ENCODE measurements at regions of chr11 and their contacts with region 1.

Region 1: DNA sequence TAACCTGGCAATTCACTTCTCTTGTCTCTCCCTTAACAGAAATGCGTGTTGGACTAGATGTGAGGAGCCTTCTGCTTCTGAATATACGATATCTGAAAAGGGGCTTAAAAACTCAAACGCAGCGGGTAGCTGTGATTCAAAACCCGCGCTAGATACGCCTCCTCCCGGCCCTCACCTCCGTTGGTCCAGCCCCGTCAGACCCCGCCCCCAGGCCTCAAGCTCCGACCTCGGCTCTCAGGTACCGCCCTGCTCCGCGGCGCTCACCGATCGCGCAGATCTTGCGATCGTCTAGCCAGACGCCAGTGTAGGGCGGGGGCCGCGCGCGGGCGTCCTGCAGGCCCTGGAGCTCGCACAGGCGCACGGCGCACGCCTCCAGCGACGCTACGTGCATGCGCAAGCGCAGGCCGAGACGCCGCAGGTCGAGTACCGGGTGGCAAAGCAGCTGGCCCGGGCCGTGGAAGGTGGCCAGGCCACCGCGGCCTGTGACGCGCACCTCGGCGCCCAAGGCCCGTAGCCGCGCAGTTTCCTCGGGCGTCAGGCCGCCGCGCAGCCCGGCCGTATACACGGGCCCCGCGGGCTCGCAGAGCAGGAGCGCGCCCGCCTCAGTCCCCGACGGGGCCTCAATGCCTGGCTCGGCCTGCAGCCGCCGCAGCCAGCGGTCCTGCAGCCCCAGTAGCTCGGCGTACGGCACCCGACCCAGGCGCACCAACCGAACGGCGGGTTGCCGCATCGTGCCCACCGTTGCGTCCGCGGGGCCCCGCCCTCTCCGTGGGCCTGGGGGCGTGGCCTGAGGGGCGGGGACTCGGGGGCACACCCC is at the start of gene LIPT2:
- DNase-seq: peak; percentile 94
- ATAC-seq: peak; percentile 95
- H3K4me3 Mint-ChIP-seq: peak within 1 kb of the TSS; percentile 85
- H3K27ac Mint-ChIP-seq: peak within 1 kb of the TSS; percentile 85
- H3K4me1 Mint-ChIP-seq: peaks cover 19% of the 10 kb centered on the region
- H3K27me3 Mint-ChIP-seq: no peaks in the 10 kb centered on the region
- CTCF ChIP-seq: no peak
- total RNA-seq, gene LIPT2: 4.1 and 5.4 TPM in 2 replicates

Region 2: DNA sequence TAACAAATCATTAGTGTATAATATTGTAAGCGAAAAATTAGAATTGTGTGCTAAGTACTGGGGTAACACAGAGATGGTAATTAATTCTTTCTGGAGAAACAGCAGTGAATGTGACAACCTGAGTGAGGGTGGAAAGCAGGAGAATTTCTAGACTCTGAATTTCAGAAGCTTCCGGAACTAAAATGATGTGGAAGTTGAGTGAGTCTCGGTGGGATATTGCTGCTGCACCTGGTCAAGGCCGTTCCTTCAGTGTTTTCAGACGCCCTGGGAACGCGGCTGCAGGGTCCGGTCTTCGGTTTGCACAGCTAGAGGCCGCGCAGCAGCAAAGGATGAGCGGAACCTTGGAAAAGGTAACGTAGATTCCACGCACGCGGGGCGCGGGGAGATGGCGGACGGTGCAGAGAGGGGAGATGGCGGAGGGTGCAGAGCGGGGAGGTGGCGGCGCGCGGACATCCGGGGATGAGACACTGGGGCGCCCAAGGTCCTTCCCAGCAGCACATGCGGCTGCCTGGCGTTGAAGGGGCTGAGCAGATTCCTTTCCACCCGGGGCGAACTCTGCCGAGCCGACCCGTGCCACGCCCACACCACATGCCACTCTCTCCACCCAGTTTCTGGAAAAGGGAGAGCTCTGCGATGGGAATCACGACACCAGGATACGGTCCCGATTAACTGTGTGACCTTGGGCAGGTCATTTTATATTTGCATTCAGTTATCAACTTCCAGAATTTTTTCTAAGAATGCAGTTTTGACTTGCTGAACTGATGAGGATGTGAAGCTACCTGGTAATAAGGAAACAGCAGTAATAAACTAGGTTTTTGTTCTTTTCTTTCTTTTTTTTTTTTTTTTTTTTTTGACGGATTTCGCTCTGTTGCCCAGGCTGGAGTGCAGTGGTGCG is 705.3 kb before region 1 on chr11 and contains the start of gene MRPL48:
- CTCF ChIA-PET with region 1: no interaction called
- POLR2A ChIA-PET with region 1: interaction called, 4 read pairs
- intact Hi-C with region 1: loop called (anchors 5 kb)
- DNase-seq: peak; percentile 84
- ATAC-seq: peak; percentile 100
- H3K4me3 Mint-ChIP-seq: peak within 1 kb of the TSS; percentile 100
- H3K27ac Mint-ChIP-seq: peak within 1 kb of the TSS; percentile 100
- H3K4me1 Mint-ChIP-seq: peaks cover 15% of the 10 kb centered on the region
- H3K27me3 Mint-ChIP-seq: no peaks in the 10 kb centered on the region
- CTCF ChIP-seq: no peak
- total RNA-seq, gene MRPL48: 38.3 and 40.6 TPM in 2 replicates

Region 3: DNA sequence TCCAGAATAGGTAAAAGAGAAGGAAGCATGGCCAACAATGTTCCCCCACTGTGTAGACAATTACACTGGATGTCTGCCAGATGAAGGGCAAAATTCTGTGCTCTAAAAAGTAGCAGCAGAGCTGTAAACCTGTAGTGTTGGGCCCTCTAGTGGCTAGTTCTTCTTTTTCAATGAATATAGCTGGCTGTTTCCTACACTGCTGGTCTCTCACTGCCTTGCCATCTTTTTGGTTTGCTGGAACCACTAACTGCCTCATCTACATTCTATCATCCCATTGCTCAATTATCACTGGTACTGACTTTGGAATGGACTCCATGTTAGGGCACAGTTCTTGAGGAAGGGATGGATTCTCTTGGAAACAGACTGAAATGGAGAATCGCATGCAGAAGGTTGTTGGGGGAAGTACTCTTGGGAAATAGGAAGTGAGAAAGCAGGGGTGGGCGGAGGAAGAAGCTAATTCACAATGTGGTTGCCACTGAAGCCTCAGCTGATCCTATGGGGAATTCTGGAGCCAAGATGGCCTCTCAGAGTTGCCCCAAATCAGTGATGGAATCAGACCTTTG is 43.7 kb before region 1 on chr11:
- CTCF ChIA-PET with region 1: interaction called, 7 read pairs
- POLR2A ChIA-PET with region 1: interaction called, 8 read pairs
- intact Hi-C with region 1: loop called (anchors 1 kb)
- DNase-seq: peak; percentile 15
- ATAC-seq: peak; percentile 92
- H3K4me3 Mint-ChIP-seq: peak overlapping the region; percentile 54
- H3K27ac Mint-ChIP-seq: no peak overlapping the region
- H3K4me1 Mint-ChIP-seq: peaks cover 9% of the 10 kb centered on the region
- H3K27me3 Mint-ChIP-seq: peaks cover 15% of the 10 kb centered on the region
- CTCF ChIP-seq: no peak

Region 4: DNA sequence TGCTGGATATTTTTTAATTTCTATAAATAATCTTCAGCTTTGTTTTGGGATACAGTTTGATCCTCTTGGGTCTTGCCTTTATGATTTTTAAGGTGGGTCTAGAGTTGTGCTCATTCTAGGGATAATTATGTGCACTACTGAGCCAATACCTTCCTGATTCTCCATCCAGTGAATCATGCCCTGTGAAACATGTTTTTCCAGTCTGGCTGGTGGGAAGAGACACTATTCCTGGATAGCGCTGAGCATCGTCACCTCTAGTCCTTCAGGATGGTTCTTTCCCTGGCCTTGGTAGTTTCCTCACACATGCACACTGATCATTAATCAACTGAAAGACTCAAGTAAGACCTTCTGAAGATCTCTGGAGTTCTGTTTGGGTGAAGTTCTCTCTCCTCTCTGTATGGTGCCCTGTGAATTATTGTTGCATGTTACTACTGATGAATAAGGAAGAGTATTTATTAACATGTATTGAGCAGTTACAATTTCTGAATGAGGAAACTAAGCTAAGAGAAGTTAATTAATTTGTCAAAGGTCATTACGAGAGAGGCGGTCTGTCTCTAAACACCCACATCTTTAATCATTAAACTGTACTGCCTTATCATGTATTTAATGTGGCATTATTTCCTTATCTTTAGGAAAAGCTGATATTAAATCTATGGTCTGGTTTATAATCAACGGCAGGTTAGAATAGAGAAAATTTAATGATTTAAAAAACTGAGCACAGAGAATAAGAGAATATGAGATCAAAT is 39.5 kb after region 1 on chr11:
- CTCF ChIA-PET with region 1: no interaction called
- POLR2A ChIA-PET with region 1: no interaction called
- intact Hi-C with region 1: no loop called
- DNase-seq: no peak
- ATAC-seq: no peak
- H3K4me3 Mint-ChIP-seq: no peak overlapping the region
- H3K27ac Mint-ChIP-seq: no peak overlapping the region
- H3K4me1 Mint-ChIP-seq: peaks cover 4% of the 10 kb centered on the region
- H3K27me3 Mint-ChIP-seq: no peaks in the 10 kb centered on the region
- CTCF ChIP-seq: no peak

Region 5: DNA sequence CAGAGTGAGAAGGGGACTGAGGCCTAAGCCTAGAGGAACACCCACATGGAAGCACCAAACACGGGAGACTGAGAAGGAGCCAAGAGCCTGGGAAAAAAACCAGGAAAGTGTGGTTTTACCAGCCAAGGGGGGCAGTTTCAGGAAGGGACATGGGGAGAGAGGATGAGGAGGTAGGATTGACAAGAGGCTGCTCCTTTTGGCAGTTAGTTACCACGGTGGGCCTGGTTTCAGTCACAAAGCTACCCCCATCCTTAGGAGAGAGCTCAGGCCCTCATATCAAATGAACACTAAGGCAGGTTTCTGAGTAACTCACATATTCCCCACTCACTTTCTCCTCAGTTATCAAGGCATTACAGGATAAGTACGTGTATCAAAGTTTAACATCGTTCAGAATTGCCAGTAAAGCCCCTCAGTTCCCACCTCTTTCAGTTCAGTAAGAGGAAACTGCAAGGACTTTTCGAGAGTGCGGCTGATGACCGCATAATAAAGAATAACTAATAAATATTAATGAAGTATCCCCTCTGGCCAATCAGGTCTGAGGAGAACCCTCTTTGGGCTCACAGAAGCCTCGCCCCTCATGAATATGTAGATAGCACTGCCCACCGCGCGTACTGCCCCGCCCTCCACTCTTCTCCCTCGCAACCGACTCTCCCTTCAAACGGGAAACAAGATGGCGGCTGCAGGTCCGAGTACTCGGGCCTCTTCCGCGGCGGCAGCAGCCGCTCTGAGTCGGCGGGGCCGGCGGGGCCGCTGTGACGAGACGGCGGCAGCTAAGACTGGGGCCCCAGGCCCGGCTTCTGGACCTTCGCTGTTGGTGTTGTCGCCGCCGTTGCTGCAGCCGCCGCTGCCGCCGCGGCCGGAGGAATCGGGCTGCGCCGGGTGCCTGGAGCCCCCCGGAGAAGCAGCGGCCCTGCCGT is 255.3 kb after region 1 on chr11 and contains the start of gene RNF169:
- CTCF ChIA-PET with region 1: no interaction called
- POLR2A ChIA-PET with region 1: interaction called, 4 read pairs
- intact Hi-C with region 1: loop called (anchors 2 kb)
- DNase-seq: peak; percentile 82
- ATAC-seq: peak; percentile 98
- H3K4me3 Mint-ChIP-seq: peak within 1 kb of the TSS; percentile 90
- H3K27ac Mint-ChIP-seq: peak within 1 kb of the TSS; percentile 95
- H3K4me1 Mint-ChIP-seq: peaks cover 32% of the 10 kb centered on the region
- H3K27me3 Mint-ChIP-seq: no peaks in the 10 kb centered on the region
- CTCF ChIP-seq: no peak
- total RNA-seq, gene RNF169: 20.4 and 22.2 TPM in 2 replicates

Region 6: GRCh38 chr11:74988541-74989260 is 495.5 kb after region 1 on chr11 and contains the start of gene NEU3:
- CTCF ChIA-PET with region 1: no interaction called
- POLR2A ChIA-PET with region 1: no interaction called
- intact Hi-C with region 1: loop called (anchors 2 kb)
- DNase-seq: peak; percentile 69
- ATAC-seq: peak; percentile 97
- H3K4me3 Mint-ChIP-seq: peak within 1 kb of the TSS; percentile 97
- H3K27ac Mint-ChIP-seq: peak within 1 kb of the TSS; percentile 89
- H3K4me1 Mint-ChIP-seq: peaks cover 40% of the 10 kb centered on the region
- H3K27me3 Mint-ChIP-seq: no peaks in the 10 kb centered on the region
- CTCF ChIP-seq: no peak
- total RNA-seq, gene NEU3: 13.2 and 16.5 TPM in 2 replicates

Measured in activated B cell treated with CpG ODN at 0.5 μM for 24 hours (primary cell).